CD4-positive, alpha-beta T cell (primary cell): ENCODE measurements at regions of chr1 and their contacts with region 1.

Region 1: GRCh38 chr1:112390775-112391602 is 5.0 kb upstream of the CTTNBP2NL start:
- DNase-seq: peak; percentile 62 to 90 (median 70)
- ATAC-seq: peak; percentile 88
- H3K4me3 ChIP-seq: no peak overlapping the region
- H3K4me3 Mint-ChIP-seq: peak overlapping the region; percentile 35
- H3K27ac ChIP-seq: no peak overlapping the region
- H3K27ac Mint-ChIP-seq: no peak overlapping the region
- H3K4me1 ChIP-seq: peaks cover 17% of the 10 kb centered on the region
- H3K4me1 Mint-ChIP-seq: peaks cover 15% of the 10 kb centered on the region
- H3K27me3 ChIP-seq: peaks cover 6 to 26% of the 10 kb centered on the region in 2 experiments
- H3K27me3 Mint-ChIP-seq: peaks cover 38% of the 10 kb centered on the region
- CTCF ChIP-seq: peak; percentile 84

Region 2: GRCh38 chr1:112466078-112466660 is 75.2 kb after region 1 on chr1:
- CTCF ChIA-PET with region 1: interaction called, 60 read pairs
- POLR2A ChIA-PET with region 1: interaction called, 10 read pairs
- intact Hi-C with region 1: loop called (anchors 1 kb)
- DNase-seq: peak; percentile 72 to 93 (median 80)
- ATAC-seq: peak; percentile 92
- H3K4me3 ChIP-seq: peak overlapping the region; percentile 49
- H3K4me3 Mint-ChIP-seq: peak overlapping the region; percentile 81
- H3K27ac ChIP-seq: no peak overlapping the region
- H3K27ac Mint-ChIP-seq: no peak overlapping the region
- H3K4me1 ChIP-seq: peaks cover 9% of the 10 kb centered on the region
- H3K4me1 Mint-ChIP-seq: peaks cover 16% of the 10 kb centered on the region
- H3K27me3 ChIP-seq: peaks cover 5 to 6% of the 10 kb centered on the region in 2 experiments
- H3K27me3 Mint-ChIP-seq: peaks cover 39% of the 10 kb centered on the region
- CTCF ChIP-seq: peak; percentile 77

Region 3: GRCh38 chr1:112614460-112615065 is 223.6 kb after region 1 on chr1:
- CTCF ChIA-PET with region 1: interaction called, 7 read pairs
- POLR2A ChIA-PET with region 1: interaction called, 4 read pairs
- intact Hi-C with region 1: loop called (anchors 1 to 2 kb)
- DNase-seq: peak in 4 of 14 experiments; percentile 25 to 63 (median 55)
- ATAC-seq: no peak
- H3K4me3 ChIP-seq: no peak overlapping the region
- H3K4me3 Mint-ChIP-seq: peak overlapping the region; percentile 75
- H3K27ac ChIP-seq: no peak overlapping the region
- H3K27ac Mint-ChIP-seq: peak overlapping the region; percentile 78
- H3K4me1 ChIP-seq: peaks cover 11% of the 10 kb centered on the region
- H3K4me1 Mint-ChIP-seq: peaks cover 25% of the 10 kb centered on the region
- H3K27me3 ChIP-seq: no peaks in the 10 kb centered on the region
- H3K27me3 Mint-ChIP-seq: no peaks in the 10 kb centered on the region
- CTCF ChIP-seq: peak; percentile 60

Region 4: DNA sequence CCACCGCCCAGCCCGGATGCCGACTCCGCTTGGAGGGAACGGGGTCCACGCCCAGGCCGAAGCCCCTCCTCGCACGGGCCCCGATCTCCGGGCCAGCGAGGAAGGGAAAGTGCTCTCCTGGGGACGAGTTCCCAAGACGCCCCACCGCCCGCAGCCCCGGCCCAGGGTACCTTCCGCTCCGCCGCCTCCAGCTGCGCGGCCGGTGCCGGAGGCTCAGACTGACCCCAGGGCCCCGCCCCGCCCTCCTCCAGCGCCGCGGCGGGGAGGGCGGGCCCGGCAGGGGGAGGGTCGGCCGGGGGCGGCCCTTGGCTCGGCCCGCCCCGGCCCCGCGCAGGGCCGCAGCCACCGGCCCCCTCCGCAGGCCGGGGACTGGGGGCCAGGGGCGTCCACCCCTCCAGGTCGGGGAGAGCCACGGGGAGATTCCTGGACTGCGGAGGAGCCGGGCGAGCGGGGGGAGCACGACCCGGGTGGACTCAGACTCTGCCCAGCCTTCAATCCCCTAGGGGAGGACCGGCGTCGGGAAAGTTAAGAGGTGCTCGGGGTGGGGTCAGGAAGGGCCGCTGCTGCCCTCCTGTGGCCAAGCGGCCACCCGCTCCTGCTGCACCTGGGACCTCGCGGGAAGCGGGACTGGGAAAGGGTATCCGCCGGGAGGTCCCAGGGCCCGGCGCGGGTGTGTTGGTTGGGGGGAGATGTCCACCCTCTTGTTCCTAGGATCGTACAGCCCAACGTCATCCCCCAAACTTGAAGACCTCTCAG is 316.1 kb after region 1 on chr1 and contains the start of gene RHOC:
- CTCF ChIA-PET with region 1: interaction called, 3 read pairs
- POLR2A ChIA-PET with region 1: no interaction called
- intact Hi-C with region 1: loop called (anchors 1 kb)
- DNase-seq: peak in 13 of 14 experiments; percentile 23 to 82 (median 53)
- ATAC-seq: peak; percentile 57
- H3K4me3 ChIP-seq: peak within 1 kb of the TSS; percentile 60
- H3K4me3 Mint-ChIP-seq: peak within 1 kb of the TSS; percentile 80
- H3K27ac ChIP-seq: peak within 1 kb of the TSS in 1 of 2 donors; percentile 60
- H3K27ac Mint-ChIP-seq: peak within 1 kb of the TSS; percentile 59
- H3K4me1 ChIP-seq: peaks cover 37% of the 10 kb centered on the region
- H3K4me1 Mint-ChIP-seq: peaks cover 50% of the 10 kb centered on the region
- H3K27me3 ChIP-seq: no peaks in the 10 kb centered on the region
- H3K27me3 Mint-ChIP-seq: no peaks in the 10 kb centered on the region
- CTCF ChIP-seq: peak; percentile 79
- total RNA-seq, gene RHOC: 11.9 to 12.7 TPM

Region 5: DNA sequence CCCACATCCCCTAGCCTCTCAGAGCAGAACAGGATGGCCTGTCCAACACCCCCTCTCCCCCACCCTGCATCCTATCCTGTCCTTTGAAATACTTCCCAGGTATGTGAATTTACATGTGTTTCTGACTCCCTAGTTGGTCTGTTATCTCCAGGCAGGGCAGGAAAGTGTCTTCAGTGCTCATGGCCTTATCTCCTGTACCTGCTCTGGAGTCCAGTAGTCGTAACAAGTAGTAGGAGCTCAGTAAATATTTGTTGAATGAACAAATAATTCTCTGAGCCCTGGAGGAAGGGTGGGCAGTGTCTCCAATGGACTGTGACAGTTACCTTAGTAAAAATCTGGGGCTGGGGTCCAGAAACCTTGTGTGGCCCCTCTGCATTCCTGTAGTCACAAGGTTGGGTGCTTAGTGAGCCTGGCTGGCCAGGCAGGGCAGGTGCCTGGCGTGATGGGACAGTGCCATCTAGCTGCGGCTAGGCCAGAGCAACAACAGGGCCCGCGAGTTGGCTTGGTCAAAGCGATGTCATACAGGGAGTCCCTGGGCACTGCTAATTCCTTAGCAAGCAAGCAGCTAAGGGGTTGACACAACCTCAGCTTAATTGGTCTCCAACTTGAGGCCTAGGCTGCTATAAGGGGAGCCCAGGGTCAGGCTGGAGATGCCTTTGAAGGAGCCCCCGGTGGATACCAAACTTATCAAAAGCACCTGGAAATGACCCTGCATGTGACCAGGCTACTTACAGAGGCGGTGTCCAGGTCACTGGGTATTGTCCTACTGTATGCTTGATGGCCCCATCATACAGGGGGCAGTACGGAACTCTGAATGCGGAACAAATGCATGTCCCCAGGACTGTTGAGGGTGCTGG is 413.1 kb after region 1 on chr1:
- CTCF ChIA-PET with region 1: interaction called, 4 read pairs
- POLR2A ChIA-PET with region 1: no interaction called
- intact Hi-C with region 1: loop called in 1 of 2 experiments (anchors 10 kb)
- DNase-seq: peak in 13 of 14 experiments; percentile 6 to 63 (median 22)
- ATAC-seq: peak; percentile 57
- H3K4me3 ChIP-seq: no peak overlapping the region
- H3K4me3 Mint-ChIP-seq: no peak overlapping the region
- H3K27ac ChIP-seq: no peak overlapping the region
- H3K27ac Mint-ChIP-seq: no peak overlapping the region
- H3K4me1 ChIP-seq: no peaks in the 10 kb centered on the region
- H3K4me1 Mint-ChIP-seq: no peaks in the 10 kb centered on the region
- H3K27me3 ChIP-seq: no peaks in the 10 kb centered on the region
- H3K27me3 Mint-ChIP-seq: peaks cover 3% of the 10 kb centered on the region
- CTCF ChIP-seq: peak; percentile 15

Region 6: GRCh38 chr1:112955781-112956543 is 565.0 kb after region 1 on chr1 and contains the start of gene SLC16A1:
- CTCF ChIA-PET with region 1: no interaction called
- POLR2A ChIA-PET with region 1: no interaction called
- intact Hi-C with region 1: loop called in 1 of 2 experiments (anchors 10 kb)
- DNase-seq: peak; percentile 78 to 95 (median 86)
- ATAC-seq: peak; percentile 74
- H3K4me3 ChIP-seq: peak within 1 kb of the TSS; percentile 86
- H3K4me3 Mint-ChIP-seq: peak within 1 kb of the TSS; percentile 98
- H3K27ac ChIP-seq: peak within 1 kb of the TSS; percentile 80 to 84
- H3K27ac Mint-ChIP-seq: peak within 1 kb of the TSS; percentile 76
- H3K4me1 ChIP-seq: peaks cover 35% of the 10 kb centered on the region
- H3K4me1 Mint-ChIP-seq: peaks cover 61% of the 10 kb centered on the region
- H3K27me3 ChIP-seq: no peaks in the 10 kb centered on the region
- H3K27me3 Mint-ChIP-seq: no peaks in the 10 kb centered on the region
- CTCF ChIP-seq: peak; percentile 14
- total RNA-seq, gene SLC16A1: 22.9 to 26.6 TPM